A549 (cell line): ENCODE measurements at regions of chr7 and their contacts with region 1.

Region 1: GRCh38 chr7:90211391-90212148 is at the start of gene STEAP2:
- DNase-seq: peak; percentile 82 to 94
- ATAC-seq: peak; percentile 98
- H3K4me3 ChIP-seq: peak within 1 kb of the TSS; percentile 74
- H3K27ac ChIP-seq: peak within 1 kb of the TSS; percentile 95 to 97
- H3K4me1 ChIP-seq: peaks cover 13% of the 10 kb centered on the region; the same call in 1 of the 3 replicates
- CTCF ChIP-seq: peak; percentile 38; the same call in 2 of the 3 replicates
- EP300 ChIP-seq: no peak
- POLR2A ChIP-seq: peak; percentile 65
- RAD21 ChIP-seq: peak; percentile 34 to 60; a peak in 4 of 5 replicates
- polyA plus RNA-seq, gene STEAP2: 49.2 and 51.9 TPM in 2 replicates

Region 2: GRCh38 chr7:90119178-90119971 is 92.2 kb before region 1 on chr7:
- CTCF ChIA-PET with region 1: no interaction called
- POLR2A ChIA-PET with region 1: no interaction called
- DNase-seq: peak in 1 of 2 experiments; percentile 6
- ATAC-seq: peak; percentile 50 to 64
- H3K4me3 ChIP-seq: peak overlapping the region; percentile 39
- H3K27ac ChIP-seq: no peak overlapping the region
- H3K4me1 ChIP-seq: peaks cover 5% of the 10 kb centered on the region; the same call in 1 of the 3 replicates
- CTCF ChIP-seq: no peak
- EP300 ChIP-seq: no peak
- POLR2A ChIP-seq: no peak
- RAD21 ChIP-seq: no peak

Region 3: GRCh38 chr7:90165724-90166123 is 45.8 kb before region 1 on chr7:
- CTCF ChIA-PET with region 1: interaction called, 10 read pairs
- POLR2A ChIA-PET with region 1: no interaction called
- DNase-seq: no peak
- ATAC-seq: no peak
- H3K4me3 ChIP-seq: no peak overlapping the region
- H3K27ac ChIP-seq: no peak overlapping the region
- H3K4me1 ChIP-seq: no peaks in the 10 kb centered on the region
- CTCF ChIP-seq: no peak
- EP300 ChIP-seq: no peak
- POLR2A ChIP-seq: no peak
- RAD21 ChIP-seq: no peak

Region 4: DNA sequence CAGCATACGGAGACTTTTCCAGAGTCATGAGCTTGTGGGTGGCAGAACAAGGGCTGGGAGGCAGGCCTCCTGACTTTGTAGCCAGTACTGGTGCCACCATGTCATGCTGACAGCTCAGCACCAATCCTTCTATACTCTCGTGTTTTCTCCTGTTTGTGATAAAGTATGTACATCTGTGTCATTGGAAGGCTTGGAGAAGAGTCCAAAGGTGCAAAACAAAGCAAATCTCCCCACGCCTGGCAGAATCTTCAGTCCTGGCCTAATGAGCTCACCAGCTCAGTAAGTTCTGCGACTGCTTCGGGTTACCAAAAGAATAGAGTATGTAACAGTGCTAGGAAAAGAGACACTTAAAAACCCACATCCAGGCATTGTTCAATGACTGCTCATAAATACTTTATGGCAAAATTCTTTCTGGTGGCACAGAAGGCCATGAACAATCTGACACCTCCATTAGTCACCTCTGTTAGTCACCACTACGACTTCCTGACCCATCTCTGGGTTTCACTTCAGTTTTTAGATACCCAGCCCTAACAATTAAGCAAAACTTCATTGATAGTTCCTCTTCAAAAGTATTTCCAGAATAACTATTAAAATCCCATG is 32.8 kb before region 1 on chr7:
- CTCF ChIA-PET with region 1: interaction called, 13 read pairs
- POLR2A ChIA-PET with region 1: interaction called, 13 read pairs
- DNase-seq: peak; percentile 25 to 60
- ATAC-seq: peak; percentile 86 to 91
- H3K4me3 ChIP-seq: no peak overlapping the region
- H3K27ac ChIP-seq: peak overlapping the region; percentile 67 to 85
- H3K4me1 ChIP-seq: peaks cover 45% of the 10 kb centered on the region
- CTCF ChIP-seq: no peak
- EP300 ChIP-seq: no peak
- POLR2A ChIP-seq: no peak
- RAD21 ChIP-seq: no peak

Region 5: DNA sequence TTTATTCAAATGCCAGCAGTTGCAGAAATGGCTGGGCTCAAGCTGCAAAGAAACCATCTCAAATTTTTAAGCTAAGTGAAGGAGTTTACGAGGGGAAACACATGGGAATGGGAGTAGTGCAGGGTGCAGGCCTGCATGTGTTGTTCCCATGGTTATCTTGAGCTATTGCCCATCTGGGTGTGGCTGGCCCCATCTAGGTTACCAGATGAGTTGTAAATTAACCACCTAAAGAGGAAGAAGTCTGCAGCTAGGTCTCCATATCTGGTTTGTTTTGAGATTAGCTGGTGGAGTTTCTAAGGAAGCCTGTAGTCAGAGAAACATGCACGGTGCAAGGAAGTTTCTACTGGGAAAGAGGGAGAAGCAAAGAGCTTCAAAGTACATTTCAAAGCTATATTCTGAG is 23.3 kb before region 1 on chr7:
- CTCF ChIA-PET with region 1: interaction called, 28 read pairs
- POLR2A ChIA-PET with region 1: interaction called, 4 read pairs
- DNase-seq: peak in 1 of 2 experiments; percentile 59
- ATAC-seq: peak in 1 of 2 experiments; percentile 68; a peak in 4 of 6 replicates
- H3K4me3 ChIP-seq: no peak overlapping the region
- H3K27ac ChIP-seq: peak overlapping the region; percentile 19 to 40; a peak in 5 of 6 replicates
- H3K4me1 ChIP-seq: peaks cover 18% of the 10 kb centered on the region; the same call in 1 of the 3 replicates
- CTCF ChIP-seq: no peak
- EP300 ChIP-seq: no peak
- POLR2A ChIP-seq: no peak
- RAD21 ChIP-seq: no peak

Region 6: DNA sequence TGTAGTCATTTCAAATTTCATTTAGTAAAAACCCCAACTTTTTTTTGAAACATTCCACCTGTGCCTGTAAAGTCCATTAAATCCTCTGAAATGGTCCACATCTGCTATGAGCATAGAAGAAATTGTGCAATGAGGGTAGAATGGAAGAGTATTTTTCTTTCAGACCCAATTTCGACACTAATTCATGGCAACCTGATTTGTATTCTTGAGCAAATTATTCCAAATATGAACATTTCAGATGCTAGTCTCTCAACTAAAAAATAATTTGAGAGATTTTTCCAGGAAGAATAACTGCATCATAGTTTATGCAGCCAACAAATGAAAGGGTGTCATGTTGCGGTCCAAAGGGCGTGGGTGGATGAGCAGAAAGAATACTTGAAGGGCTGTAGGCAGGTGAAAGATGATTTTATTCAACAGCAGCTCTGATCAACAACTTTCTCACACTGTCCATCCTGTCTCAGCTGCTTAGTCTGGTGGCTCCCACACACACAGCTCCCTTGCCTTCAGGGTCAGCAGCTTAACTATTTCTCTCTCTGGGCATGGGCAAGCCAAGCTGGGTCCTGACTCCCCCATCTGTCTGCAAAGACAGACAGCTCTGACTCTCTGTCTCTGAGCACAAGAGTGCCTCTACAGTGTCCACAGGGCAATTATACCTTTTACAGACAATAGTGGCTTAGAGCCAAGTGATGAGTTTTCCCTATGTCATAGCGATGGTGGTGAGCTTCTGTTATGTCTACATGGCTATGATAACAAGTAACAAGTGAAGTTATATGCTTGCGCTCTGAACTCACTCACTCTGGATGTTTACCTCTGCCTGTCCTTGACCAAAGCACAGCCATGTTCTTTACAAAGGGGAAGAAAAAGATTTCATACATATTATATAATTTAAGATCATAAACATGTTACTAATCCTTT is 11.5 kb after region 1 on chr7:
- CTCF ChIA-PET with region 1: interaction called, 12 read pairs
- POLR2A ChIA-PET with region 1: interaction called, 7 read pairs
- DNase-seq: peak in 1 of 2 experiments; percentile 72
- ATAC-seq: peak; percentile 59 to 85; a peak in 5 of 6 replicates
- H3K4me3 ChIP-seq: no peak overlapping the region
- H3K27ac ChIP-seq: peak overlapping the region in 1 of 2 experiments; percentile 23; a peak in 1 of 6 replicates
- H3K4me1 ChIP-seq: peaks cover 11% of the 10 kb centered on the region
- CTCF ChIP-seq: no peak
- EP300 ChIP-seq: no peak
- POLR2A ChIP-seq: no peak
- RAD21 ChIP-seq: no peak

Region 7: DNA sequence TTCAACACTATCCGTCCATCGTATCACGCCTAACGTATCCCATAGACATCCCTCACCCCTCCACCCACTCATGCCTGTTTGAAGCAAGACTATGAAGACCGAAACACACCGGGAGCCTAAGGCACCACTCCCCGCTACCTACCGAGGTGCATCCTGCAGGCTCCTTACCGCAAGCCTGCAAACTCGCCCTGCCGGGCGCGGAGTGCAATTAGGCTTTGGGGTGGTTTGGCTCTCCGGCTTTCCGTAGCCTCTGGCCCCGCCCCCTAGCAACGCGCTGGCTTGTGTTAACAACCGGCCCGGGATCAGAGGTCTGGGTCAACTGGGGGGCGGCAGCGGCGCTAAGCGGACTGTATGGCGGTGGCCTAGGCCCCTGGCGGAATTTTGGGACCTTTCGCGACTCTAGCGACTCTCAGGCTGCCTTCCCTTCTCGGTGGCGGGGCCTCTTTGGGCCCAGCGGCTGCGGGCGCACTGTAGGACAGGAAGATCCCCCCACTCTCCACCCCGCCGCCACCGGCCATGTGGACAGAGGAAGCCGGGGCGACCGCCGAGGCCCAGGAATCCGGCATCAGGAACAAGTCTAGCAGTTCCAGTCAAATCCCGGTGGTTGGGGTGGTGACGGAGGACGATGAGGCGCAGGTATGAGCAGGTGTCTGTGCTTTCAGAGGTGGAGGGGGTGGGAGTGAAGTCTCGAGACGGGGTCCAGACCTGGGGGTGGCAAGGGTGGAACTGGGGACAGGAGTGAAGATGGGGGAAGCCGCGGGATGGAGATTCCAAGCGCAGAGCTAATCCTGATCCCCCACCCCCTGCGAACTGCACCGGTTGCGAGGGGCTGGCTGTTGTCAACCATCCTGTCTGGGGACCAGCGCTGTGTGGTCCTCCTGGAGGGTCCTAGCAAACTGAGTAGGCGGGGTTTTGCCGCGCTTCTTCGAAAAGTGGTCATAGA is 33.6 kb after region 1 on chr7 and contains the start of gene CFAP69:
- CTCF ChIA-PET with region 1: interaction called, 23 read pairs
- POLR2A ChIA-PET with region 1: interaction called, 4 read pairs
- DNase-seq: peak; percentile 89
- ATAC-seq: peak; percentile 88 to 95
- H3K4me3 ChIP-seq: peak within 1 kb of the TSS; percentile 97
- H3K27ac ChIP-seq: peak within 1 kb of the TSS; percentile 79 to 86
- H3K4me1 ChIP-seq: peaks cover 11% of the 10 kb centered on the region; the same call in 2 of the 3 replicates
- CTCF ChIP-seq: no peak
- EP300 ChIP-seq: no peak
- POLR2A ChIP-seq: peak; percentile 79
- RAD21 ChIP-seq: peak; percentile 11 to 24; a peak in 2 of 5 replicates
- polyA plus RNA-seq, gene CFAP69: 5.2 and 6.1 TPM in 2 replicates

Region 8: DNA sequence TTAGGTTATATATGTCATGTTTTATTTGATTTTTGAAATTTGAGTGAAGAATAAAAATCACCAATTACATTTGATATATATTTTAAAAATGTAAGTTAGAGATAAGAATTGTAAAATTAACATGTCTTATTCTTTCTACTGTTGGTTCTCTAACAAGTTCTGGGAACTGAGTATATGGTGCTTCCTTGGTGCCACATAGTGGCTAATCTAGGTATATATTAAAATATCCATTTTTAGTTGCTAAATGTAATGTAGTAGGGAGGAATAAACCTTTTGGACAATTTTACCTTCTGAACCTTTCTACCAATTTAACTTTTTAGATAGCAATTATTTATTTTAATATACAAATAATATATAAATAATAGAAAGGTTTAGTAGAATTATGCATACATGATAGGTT is 50.9 kb after region 1 on chr7:
- CTCF ChIA-PET with region 1: interaction called, 10 read pairs
- POLR2A ChIA-PET with region 1: interaction called, 3 read pairs
- DNase-seq: peak; percentile 37 to 42
- ATAC-seq: peak in 1 of 2 experiments; percentile 84; a peak in 4 of 6 replicates
- H3K4me3 ChIP-seq: no peak overlapping the region
- H3K27ac ChIP-seq: no peak overlapping the region
- H3K4me1 ChIP-seq: no peaks in the 10 kb centered on the region
- CTCF ChIP-seq: peak; percentile 76
- EP300 ChIP-seq: no peak
- POLR2A ChIP-seq: no peak
- RAD21 ChIP-seq: peak; percentile 77 to 84

Region 9: GRCh38 chr7:90290244-90291113 is 78.9 kb after region 1 on chr7:
- CTCF ChIA-PET with region 1: no interaction called
- POLR2A ChIA-PET with region 1: no interaction called
- DNase-seq: no peak
- ATAC-seq: no peak
- H3K4me3 ChIP-seq: no peak overlapping the region
- H3K27ac ChIP-seq: no peak overlapping the region
- H3K4me1 ChIP-seq: no peaks in the 10 kb centered on the region
- CTCF ChIP-seq: no peak
- EP300 ChIP-seq: no peak
- POLR2A ChIP-seq: no peak
- RAD21 ChIP-seq: no peak